ENCODE measurements at regions of chr1 and their contacts with region 1.

Region 1: GRCh38 chr1:248807067-248807737 is 18.5 kb downstream of the SH3BP5L start:
- DNase-seq: peak; percentile 26 to 75 (median 45)
- ATAC-seq: peak; percentile 93
- H3K4me3 ChIP-seq: no peak overlapping the region
- H3K4me3 Mint-ChIP-seq: no peak overlapping the region
- H3K27ac ChIP-seq: no peak overlapping the region
- H3K27ac Mint-ChIP-seq: no peak overlapping the region
- H3K4me1 ChIP-seq: peaks cover 7% of the 10 kb centered on the region
- H3K4me1 Mint-ChIP-seq: peaks cover 10% of the 10 kb centered on the region
- H3K27me3 ChIP-seq: no peaks in the 10 kb centered on the region
- H3K27me3 Mint-ChIP-seq: peaks cover 5% of the 10 kb centered on the region
- CTCF ChIP-seq: peak; percentile 93

Region 2: DNA sequence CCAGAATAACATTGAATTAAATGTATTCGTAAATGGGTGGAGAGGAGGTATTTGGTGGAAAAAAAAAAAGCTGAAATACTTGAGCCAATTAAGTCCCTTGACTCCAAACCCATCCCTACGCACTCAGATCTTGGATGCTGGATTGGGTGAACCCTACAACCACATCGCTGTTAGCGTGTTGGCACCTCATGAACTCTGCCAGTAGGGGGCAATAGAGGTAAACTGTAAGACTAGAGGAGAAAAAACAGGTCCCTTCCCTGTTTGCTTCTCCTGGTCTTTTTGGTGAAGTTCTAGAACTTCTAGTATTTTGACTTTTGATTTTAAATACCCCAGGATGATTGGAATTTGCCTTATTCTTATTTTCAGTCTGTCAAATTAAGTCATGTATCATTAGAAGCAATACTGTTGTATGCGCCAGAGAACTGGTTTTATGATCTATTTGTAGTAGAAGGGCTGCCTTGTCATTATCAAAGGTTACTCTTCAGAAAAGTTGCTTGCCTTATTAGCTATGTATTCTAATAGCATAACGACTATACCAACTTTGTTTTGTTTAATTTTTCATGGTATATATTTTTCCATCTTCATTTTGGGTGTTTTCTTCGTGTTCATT is 1125.8 kb before region 1 on chr1:
- CTCF ChIA-PET with region 1: no interaction called
- POLR2A ChIA-PET with region 1: no interaction called
- intact Hi-C with region 1: loop called (anchors 5 kb)
- DNase-seq: peak in 5 of 14 experiments; percentile 1 to 47 (median 21)
- ATAC-seq: no peak
- H3K4me3 ChIP-seq: no peak overlapping the region
- H3K4me3 Mint-ChIP-seq: no peak overlapping the region
- H3K27ac ChIP-seq: no peak overlapping the region
- H3K27ac Mint-ChIP-seq: no peak overlapping the region
- H3K4me1 ChIP-seq: no peaks in the 10 kb centered on the region
- H3K4me1 Mint-ChIP-seq: no peaks in the 10 kb centered on the region
- H3K27me3 ChIP-seq: no peaks in the 10 kb centered on the region
- H3K27me3 Mint-ChIP-seq: no peaks in the 10 kb centered on the region
- CTCF ChIP-seq: peak; percentile 66

Region 3: DNA sequence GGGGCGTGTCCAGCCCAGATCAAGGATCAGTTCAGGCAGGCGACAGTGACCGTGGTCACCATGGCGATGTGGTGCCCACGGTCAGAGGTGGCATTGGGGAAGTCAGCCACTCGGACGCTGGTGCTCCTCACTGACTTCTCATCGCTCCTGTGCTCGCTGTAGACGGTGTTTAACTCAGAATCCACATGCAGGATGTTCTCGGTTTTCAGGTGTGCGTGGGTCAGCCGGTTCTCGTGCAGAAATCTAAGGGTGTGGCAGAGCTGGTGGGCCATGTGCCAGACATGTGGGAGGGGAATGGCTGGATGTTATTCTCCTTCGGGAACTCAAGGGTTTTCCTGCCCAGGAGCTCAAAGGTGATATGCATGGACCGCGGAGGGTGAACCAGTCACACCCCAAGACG is 870.8 kb before region 1 on chr1:
- CTCF ChIA-PET with region 1: no interaction called
- POLR2A ChIA-PET with region 1: no interaction called
- intact Hi-C with region 1: loop called (anchors 1 to 2 kb)
- DNase-seq: peak in 2 of 14 experiments; percentile 2 to 18
- ATAC-seq: no peak
- H3K4me3 ChIP-seq: no peak overlapping the region
- H3K4me3 Mint-ChIP-seq: peak overlapping the region; percentile 36
- H3K27ac ChIP-seq: no peak overlapping the region
- H3K27ac Mint-ChIP-seq: no peak overlapping the region
- H3K4me1 ChIP-seq: peaks cover 8% of the 10 kb centered on the region
- H3K4me1 Mint-ChIP-seq: peaks cover 6% of the 10 kb centered on the region
- H3K27me3 ChIP-seq: no peaks in the 10 kb centered on the region
- H3K27me3 Mint-ChIP-seq: no peaks in the 10 kb centered on the region
- CTCF ChIP-seq: no peak

Region 4: GRCh38 chr1:248243204-248243603 is 564.0 kb before region 1 on chr1:
- CTCF ChIA-PET with region 1: no interaction called
- POLR2A ChIA-PET with region 1: no interaction called
- intact Hi-C with region 1: loop called (anchors 1 to 2 kb)
- DNase-seq: peak in 6 of 14 experiments; percentile 3 to 59 (median 22)
- ATAC-seq: peak; percentile 57
- H3K4me3 ChIP-seq: no peak overlapping the region
- H3K4me3 Mint-ChIP-seq: no peak overlapping the region
- H3K27ac ChIP-seq: no peak overlapping the region
- H3K27ac Mint-ChIP-seq: no peak overlapping the region
- H3K4me1 ChIP-seq: peaks cover 3% of the 10 kb centered on the region
- H3K4me1 Mint-ChIP-seq: peaks cover 4% of the 10 kb centered on the region
- H3K27me3 ChIP-seq: peaks cover 0 to 5% of the 10 kb centered on the region in 2 experiments
- H3K27me3 Mint-ChIP-seq: peaks cover 19% of the 10 kb centered on the region
- CTCF ChIP-seq: peak; percentile 83

Region 5: GRCh38 chr1:248404024-248404423 is 403.2 kb before region 1 on chr1:
- CTCF ChIA-PET with region 1: interaction called, 5 read pairs
- POLR2A ChIA-PET with region 1: no interaction called
- intact Hi-C with region 1: loop called (anchors 5 kb)
- DNase-seq: peak in 3 of 14 experiments; percentile 11 to 37 (median 15)
- ATAC-seq: no peak
- H3K4me3 ChIP-seq: no peak overlapping the region
- H3K4me3 Mint-ChIP-seq: no peak overlapping the region
- H3K27ac ChIP-seq: no peak overlapping the region
- H3K27ac Mint-ChIP-seq: no peak overlapping the region
- H3K4me1 ChIP-seq: no peaks in the 10 kb centered on the region
- H3K4me1 Mint-ChIP-seq: no peaks in the 10 kb centered on the region
- H3K27me3 ChIP-seq: no peaks in the 10 kb centered on the region
- H3K27me3 Mint-ChIP-seq: no peaks in the 10 kb centered on the region
- CTCF ChIP-seq: no peak

Region 6: GRCh38 chr1:248622570-248623001 is 184.6 kb before region 1 on chr1:
- CTCF ChIA-PET with region 1: no interaction called
- POLR2A ChIA-PET with region 1: no interaction called
- intact Hi-C with region 1: loop called (anchors 2 to 5 kb)
- DNase-seq: peak in 4 of 14 experiments; percentile 11 to 53 (median 38)
- ATAC-seq: peak; percentile 70
- H3K4me3 ChIP-seq: no peak overlapping the region
- H3K4me3 Mint-ChIP-seq: no peak overlapping the region
- H3K27ac ChIP-seq: no peak overlapping the region
- H3K27ac Mint-ChIP-seq: no peak overlapping the region
- H3K4me1 ChIP-seq: no peaks in the 10 kb centered on the region
- H3K4me1 Mint-ChIP-seq: no peaks in the 10 kb centered on the region
- H3K27me3 ChIP-seq: no peaks in the 10 kb centered on the region
- H3K27me3 Mint-ChIP-seq: no peaks in the 10 kb centered on the region
- CTCF ChIP-seq: peak; percentile 62

Region 7: GRCh38 chr1:248831842-248832241 is 24.6 kb after region 1 on chr1:
- CTCF ChIA-PET with region 1: no interaction called
- POLR2A ChIA-PET with region 1: no interaction called
- intact Hi-C with region 1: no loop called
- DNase-seq: no peak
- ATAC-seq: no peak
- H3K4me3 ChIP-seq: no peak overlapping the region
- H3K4me3 Mint-ChIP-seq: no peak overlapping the region
- H3K27ac ChIP-seq: no peak overlapping the region
- H3K27ac Mint-ChIP-seq: no peak overlapping the region
- H3K4me1 ChIP-seq: peaks cover 7% of the 10 kb centered on the region
- H3K4me1 Mint-ChIP-seq: peaks cover 12% of the 10 kb centered on the region
- H3K27me3 ChIP-seq: no peaks in the 10 kb centered on the region
- H3K27me3 Mint-ChIP-seq: peaks cover 7% of the 10 kb centered on the region
- CTCF ChIP-seq: no peak

Measured in CD4-positive, alpha-beta T cell (primary cell).